Activated CD8-positive, alpha-beta memory T cell treated with anti-CD3 and anti-CD28 coated beads, Interleukin-2, amount 10 ng/mL, durations not matched to agents 7 days and 5 days (primary cell): ENCODE measurements at regions of chr11 and their contacts with region 1.

Region 1: GRCh38 chr11:119168471-119169281 is at the start of gene NLRX1:
- DNase-seq: peak; percentile 91
- ATAC-seq: peak; percentile 95
- H3K4me3 Mint-ChIP-seq: peak within 1 kb of the TSS; percentile 85
- H3K27ac Mint-ChIP-seq: peak within 1 kb of the TSS; percentile 91
- H3K4me1 Mint-ChIP-seq: peaks cover 20% of the 10 kb centered on the region
- H3K27me3 Mint-ChIP-seq: no peaks in the 10 kb centered on the region
- total RNA-seq, gene NLRX1: 21.2 to 22.2 TPM

Region 2: DNA sequence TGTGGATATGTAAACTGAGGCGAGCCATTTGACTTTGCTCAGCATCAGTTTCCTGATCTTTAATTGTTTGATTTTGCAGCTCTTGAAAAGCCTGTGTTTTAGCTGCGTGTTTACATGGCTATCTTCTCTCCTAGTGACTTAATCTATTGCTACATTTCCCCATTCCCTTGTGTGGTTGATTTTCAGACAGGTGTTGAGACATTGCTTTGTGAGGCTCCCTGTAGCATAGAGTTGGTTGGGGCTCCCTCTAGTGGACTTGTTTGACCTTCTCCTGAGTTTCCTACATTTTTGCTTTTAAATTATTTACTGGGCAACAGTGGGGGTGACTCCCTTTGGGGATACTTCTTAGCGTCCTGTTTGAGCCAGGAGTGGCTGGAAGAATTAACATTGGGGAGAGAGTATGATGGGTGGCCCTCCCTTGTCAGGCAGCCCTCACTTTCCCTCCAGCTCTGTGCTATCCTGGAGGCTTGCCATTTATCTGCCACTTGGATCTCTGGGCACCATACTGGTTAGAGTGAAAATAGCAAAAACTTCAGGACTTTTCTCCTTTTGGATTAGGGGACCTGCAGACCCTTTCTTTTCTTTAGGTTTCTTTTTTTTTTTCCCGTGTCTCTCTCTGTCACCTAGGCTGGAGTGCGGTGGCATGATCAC is 28.3 kb after region 1 on chr11:
- CTCF ChIA-PET with region 1: interaction called, 25 read pairs
- DNase-seq: peak; percentile 76
- ATAC-seq: peak; percentile 97
- H3K4me3 Mint-ChIP-seq: no peak overlapping the region
- H3K27ac Mint-ChIP-seq: no peak overlapping the region
- H3K4me1 Mint-ChIP-seq: peaks cover 4% of the 10 kb centered on the region
- H3K27me3 Mint-ChIP-seq: no peaks in the 10 kb centered on the region

Region 3: GRCh38 chr11:119347242-119347641 is 178.6 kb after region 1 on chr11:
- CTCF ChIA-PET with region 1: no interaction called
- DNase-seq: no peak
- ATAC-seq: no peak
- H3K4me3 Mint-ChIP-seq: no peak overlapping the region
- H3K27ac Mint-ChIP-seq: no peak overlapping the region
- H3K4me1 Mint-ChIP-seq: peaks cover 9% of the 10 kb centered on the region
- H3K27me3 Mint-ChIP-seq: peaks cover 23% of the 10 kb centered on the region